Lower lobe of right lung (tissue), 2 donors: ENCODE measurements at regions of chr7 and their contacts with region 1.

Region 1: GRCh38 chr7:26061688-26062150 is 90.3 kb upstream of the NFE2L3 start:
- DNase-seq: peak; percentile 68
- ATAC-seq: peak; percentile 89 to 90
- H3K4me3 ChIP-seq: no peak overlapping the region
- H3K27ac ChIP-seq: no peak overlapping the region
- H3K4me1 ChIP-seq: no peaks in the 10 kb centered on the region
- H3K27me3 ChIP-seq: peaks cover 9% of the 10 kb centered on the region
- CTCF ChIP-seq: peak; percentile 82

Region 2: DNA sequence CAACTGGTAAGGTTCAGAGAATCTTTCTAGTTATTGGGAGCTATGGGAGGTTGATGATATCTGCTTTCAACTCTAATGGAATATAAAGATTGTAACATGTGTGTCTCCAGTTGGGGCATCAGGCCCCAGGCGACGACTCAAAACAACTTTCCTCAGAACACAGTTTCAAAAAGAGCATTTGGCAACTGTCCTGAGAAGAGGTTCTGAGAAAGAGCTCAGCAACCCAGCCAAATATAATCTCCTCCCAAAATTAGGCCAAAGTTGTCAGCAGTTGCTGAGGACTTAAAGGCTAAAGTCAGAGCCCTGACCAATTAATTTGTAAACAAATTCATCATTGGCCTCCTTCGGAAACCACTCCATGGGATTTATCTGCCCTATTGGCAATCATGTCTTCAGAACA is 160.8 kb before region 1 on chr7:
- intact Hi-C with region 1: loop called (anchors 5 kb)
- DNase-seq: no peak
- ATAC-seq: no peak
- H3K4me3 ChIP-seq: no peak overlapping the region
- H3K27ac ChIP-seq: no peak overlapping the region
- H3K4me1 ChIP-seq: no peaks in the 10 kb centered on the region
- H3K27me3 ChIP-seq: no peaks in the 10 kb centered on the region
- CTCF ChIP-seq: no peak

Region 3: GRCh38 chr7:26187380-26188205 is 125.9 kb after region 1 on chr7:
- intact Hi-C with region 1: no loop called
- DNase-seq: no peak
- ATAC-seq: peak in 1 of 2 donors; percentile 17
- H3K4me3 ChIP-seq: no peak overlapping the region
- H3K27ac ChIP-seq: no peak overlapping the region
- H3K4me1 ChIP-seq: peaks cover 36% of the 10 kb centered on the region
- H3K27me3 ChIP-seq: no peaks in the 10 kb centered on the region
- CTCF ChIP-seq: no peak